ENCODE measurements at regions of chr7 and their contacts with region 1.

Region 1: GRCh38 chr7:117014673-117015133 is 61.4 kb downstream of the ST7 start:
- DNase-seq: peak; percentile 64 to 89 (median 80)
- H3K4me3 ChIP-seq: peak overlapping the region in 3 of 7 experiments; percentile 12 to 57 (median 53)
- H3K27ac ChIP-seq: peak overlapping the region in 1 of 2 experiments; percentile 77
- H3K4me1 ChIP-seq: peaks cover 6 to 50% (median 31%) of the 10 kb centered on the region in 4 experiments
- H3K27me3 ChIP-seq: no peaks in the 10 kb centered on the region

Region 2: GRCh38 chr7:116327752-116328151 is 687.0 kb before region 1 on chr7:
- CTCF ChIA-PET with region 1: no interaction called
- POLR2A ChIA-PET with region 1: no interaction called
- DNase-seq: no peak
- H3K4me3 ChIP-seq: no peak overlapping the region
- H3K27ac ChIP-seq: no peak overlapping the region
- H3K4me1 ChIP-seq: no peaks in the 10 kb centered on the region
- H3K27me3 ChIP-seq: no peaks in the 10 kb centered on the region

Region 3: GRCh38 chr7:117034851-117035464 is 20.3 kb after region 1 on chr7:
- CTCF ChIA-PET with region 1: interaction called, 16 read pairs
- POLR2A ChIA-PET with region 1: no interaction called
- DNase-seq: no peak
- H3K4me3 ChIP-seq: no peak overlapping the region
- H3K27ac ChIP-seq: no peak overlapping the region
- H3K4me1 ChIP-seq: no peaks in the 10 kb centered on the region
- H3K27me3 ChIP-seq: no peaks in the 10 kb centered on the region

Region 4: GRCh38 chr7:117119192-117119924 is 104.7 kb after region 1 on chr7:
- CTCF ChIA-PET with region 1: interaction called, 12 read pairs
- POLR2A ChIA-PET with region 1: no interaction called
- DNase-seq: peak; percentile 77 to 89 (median 85)
- H3K4me3 ChIP-seq: no peak overlapping the region
- H3K27ac ChIP-seq: no peak overlapping the region
- H3K4me1 ChIP-seq: peaks cover 0 to 4% (median 1%) of the 10 kb centered on the region in 4 experiments
- H3K27me3 ChIP-seq: no peaks in the 10 kb centered on the region